Adrenal gland (tissue), 19 donors: ENCODE measurements at regions of chr13 and their contacts with region 1.

Region 1: DNA sequence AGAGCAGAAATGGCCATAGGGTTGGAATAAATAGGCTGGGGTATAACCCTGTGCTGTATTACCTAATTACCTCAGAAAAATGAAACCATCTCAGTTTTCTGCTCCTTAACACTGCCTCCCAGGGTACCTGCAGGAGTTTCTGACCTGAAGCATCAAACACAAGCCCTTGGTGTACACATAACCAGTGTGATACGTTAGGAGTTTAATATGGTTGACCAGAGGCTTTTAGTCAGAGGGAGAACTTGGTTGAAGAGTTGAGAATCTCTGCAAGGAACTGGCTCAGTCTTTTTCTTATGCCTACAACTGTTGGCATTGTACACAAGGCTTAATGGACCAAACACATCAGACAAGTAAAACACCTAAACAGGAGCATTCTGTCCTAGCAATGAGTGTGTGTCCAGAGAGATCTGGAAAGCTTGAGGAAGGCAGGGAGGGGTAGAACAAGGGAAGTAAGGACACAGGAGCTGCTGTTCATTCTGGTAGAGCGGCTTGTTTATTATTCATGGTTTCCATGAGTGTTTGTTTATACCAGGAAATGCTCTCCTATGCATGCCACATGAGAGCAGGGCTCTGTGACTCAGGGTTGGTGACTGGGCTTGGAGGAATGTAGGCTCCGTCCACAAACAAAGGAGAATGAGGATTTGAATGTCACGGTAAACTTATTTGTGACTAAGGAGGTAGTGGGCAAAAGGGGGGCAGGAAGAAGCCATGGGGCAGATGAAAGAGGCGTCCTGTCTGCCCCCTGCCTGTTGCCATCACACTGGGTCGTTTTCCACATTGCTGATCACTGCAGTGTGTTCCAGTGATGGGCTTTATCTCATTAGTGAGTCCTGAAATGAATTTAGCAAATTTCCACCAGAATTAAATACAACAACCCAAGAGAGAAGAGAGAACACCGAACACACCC is 11.9 kb upstream of the SPATA13 start:
- DNase-seq: peak in 6 of 7 donors; percentile 81 to 89 (median 84)
- H3K4me3 ChIP-seq: no peak overlapping the region
- H3K27ac ChIP-seq: peak overlapping the region in 3 of 5 donors; percentile 29 to 87 (median 76)
- H3K4me1 ChIP-seq: peaks cover 0 to 17% of the 10 kb centered on the region in 2 donors
- H3K27me3 ChIP-seq: no peaks in the 10 kb centered on the region
- CTCF ChIP-seq: no peak
- POLR2A ChIP-seq: no peak

Region 2: GRCh38 chr13:24053519-24054251 is 95.0 kb before region 1 on chr13:
- intact Hi-C with region 1: loop called in 1 of 2 experiments (anchors 10 kb)
- DNase-seq: peak; percentile 68 to 86 (median 78)
- H3K4me3 ChIP-seq: no peak overlapping the region
- H3K27ac ChIP-seq: peak overlapping the region in 3 of 5 donors; percentile 47 to 85 (median 71)
- H3K4me1 ChIP-seq: peaks cover 0 to 24% of the 10 kb centered on the region in 2 donors
- H3K27me3 ChIP-seq: no peaks in the 10 kb centered on the region
- CTCF ChIP-seq: peak; percentile 50 to 82 (median 76)
- POLR2A ChIP-seq: no peak

Region 3: GRCh38 chr13:24341439-24341838 is 192.8 kb after region 1 on chr13:
- intact Hi-C with region 1: no loop called
- DNase-seq: no peak
- H3K4me3 ChIP-seq: no peak overlapping the region
- H3K27ac ChIP-seq: no peak overlapping the region
- H3K4me1 ChIP-seq: no peaks in the 10 kb centered on the region
- H3K27me3 ChIP-seq: no peaks in the 10 kb centered on the region
- CTCF ChIP-seq: no peak
- POLR2A ChIP-seq: no peak